Activated CD4-positive, alpha-beta T cell treated with anti-CD3 and anti-CD28 coated beads, Interleukin-2, amount 10 ng/mL, durations not matched to agents 24 days and 14 days (primary cell): ENCODE measurements at regions of chr12 and their contacts with region 1.

Region 1: GRCh38 chr12:47111392-47111778 is 31.6 kb upstream of the AMIGO2 start:
- DNase-seq: peak; percentile 68
- H3K4me3 Mint-ChIP-seq: peak overlapping the region; percentile 28
- H3K27ac Mint-ChIP-seq: peak overlapping the region; percentile 73
- H3K4me1 Mint-ChIP-seq: peaks cover 21% of the 10 kb centered on the region
- H3K27me3 Mint-ChIP-seq: no peaks in the 10 kb centered on the region

Region 2: GRCh38 chr12:46585854-46586621 is 525.3 kb before region 1 on chr12:
- intact Hi-C with region 1: no loop called
- DNase-seq: peak; percentile 89
- H3K4me3 Mint-ChIP-seq: peak overlapping the region; percentile 41
- H3K27ac Mint-ChIP-seq: peak overlapping the region; percentile 43
- H3K4me1 Mint-ChIP-seq: peaks cover 43% of the 10 kb centered on the region
- H3K27me3 Mint-ChIP-seq: no peaks in the 10 kb centered on the region

Region 3: GRCh38 chr12:47085815-47086252 is 25.6 kb before region 1 on chr12:
- intact Hi-C with region 1: loop called (anchors 1 kb)
- DNase-seq: peak; percentile 82
- H3K4me3 Mint-ChIP-seq: peak overlapping the region; percentile 42
- H3K27ac Mint-ChIP-seq: peak overlapping the region; percentile 78
- H3K4me1 Mint-ChIP-seq: peaks cover 48% of the 10 kb centered on the region
- H3K27me3 Mint-ChIP-seq: no peaks in the 10 kb centered on the region

Region 4: GRCh38 chr12:47408171-47408871 is 296.9 kb after region 1 on chr12:
- intact Hi-C with region 1: no loop called
- DNase-seq: peak; percentile 81
- H3K4me3 Mint-ChIP-seq: no peak overlapping the region
- H3K27ac Mint-ChIP-seq: no peak overlapping the region
- H3K4me1 Mint-ChIP-seq: peaks cover 43% of the 10 kb centered on the region
- H3K27me3 Mint-ChIP-seq: no peaks in the 10 kb centered on the region